Calu3 (cell line): ENCODE measurements at regions of chr20 and their contacts with region 1.

Region 1: DNA sequence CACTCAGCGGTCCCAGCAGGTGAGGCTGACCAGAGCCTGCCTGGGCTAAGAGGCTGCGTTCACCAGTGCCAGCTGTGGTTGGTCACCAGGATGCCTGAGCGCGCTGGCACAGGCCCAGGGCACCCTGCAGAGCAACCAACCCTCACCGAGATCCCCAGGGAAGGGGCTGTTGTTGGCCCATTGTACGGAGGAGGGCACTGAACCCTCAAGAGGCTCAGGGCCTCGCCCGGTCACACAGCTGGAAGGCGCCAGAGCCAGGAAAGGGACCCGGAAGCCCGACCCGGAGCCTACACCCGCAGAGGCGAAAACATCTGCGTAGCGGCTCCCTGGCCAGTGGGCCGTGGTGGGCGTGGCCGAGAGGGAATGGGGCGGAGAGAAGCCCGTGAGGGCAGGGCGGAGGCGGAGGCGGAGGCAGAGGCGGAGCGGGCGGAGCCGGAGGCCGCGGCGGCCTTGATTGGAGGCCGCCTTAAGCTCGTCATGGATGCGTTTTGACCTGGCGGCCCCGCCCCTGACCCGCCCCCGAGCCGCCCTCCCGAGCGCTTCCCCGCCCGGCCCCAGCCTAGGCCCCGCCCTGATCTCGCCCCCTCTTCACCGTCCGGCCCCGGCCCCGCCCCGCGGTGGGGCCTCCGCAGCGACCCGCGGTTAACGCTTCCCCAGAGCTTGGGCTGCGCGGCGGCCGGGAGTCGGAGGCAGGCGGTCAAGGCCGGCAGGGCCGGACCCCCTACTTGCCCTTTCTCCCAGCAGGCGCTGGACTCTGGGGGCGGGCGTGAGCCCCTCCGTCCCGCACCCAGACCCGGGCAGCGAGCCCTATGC is 2.2 kb upstream of the MRGBP start:
- DNase-seq: peak; percentile 99
- H3K4me3 Mint-ChIP-seq: peak overlapping the region; percentile 78
- H3K27ac Mint-ChIP-seq: peak overlapping the region; percentile 82
- H3K4me1 Mint-ChIP-seq: peaks cover 41% of the 10 kb centered on the region
- H3K27me3 Mint-ChIP-seq: peaks cover 15% of the 10 kb centered on the region
- CTCF ChIP-seq: no peak

Region 2: GRCh38 chr20:62500237-62500864 is 293.8 kb before region 1 on chr20:
- CTCF ChIA-PET with region 1: interaction called, 5 read pairs
- intact Hi-C with region 1: loop called (anchors 5 kb)
- DNase-seq: peak; percentile 90
- H3K4me3 Mint-ChIP-seq: no peak overlapping the region
- H3K27ac Mint-ChIP-seq: peak overlapping the region; percentile 1
- H3K4me1 Mint-ChIP-seq: peaks cover 20% of the 10 kb centered on the region
- H3K27me3 Mint-ChIP-seq: peaks cover 23% of the 10 kb centered on the region
- CTCF ChIP-seq: peak; percentile 93

Region 3: GRCh38 chr20:62623488-62624324 is 170.4 kb before region 1 on chr20:
- CTCF ChIA-PET with region 1: interaction called, 8 read pairs
- intact Hi-C with region 1: loop called (anchors 2 kb)
- DNase-seq: peak; percentile 98
- H3K4me3 Mint-ChIP-seq: peak overlapping the region; percentile 44
- H3K27ac Mint-ChIP-seq: peak overlapping the region; percentile 86
- H3K4me1 Mint-ChIP-seq: peaks cover 37% of the 10 kb centered on the region
- H3K27me3 Mint-ChIP-seq: no peaks in the 10 kb centered on the region
- CTCF ChIP-seq: no peak

Region 4: DNA sequence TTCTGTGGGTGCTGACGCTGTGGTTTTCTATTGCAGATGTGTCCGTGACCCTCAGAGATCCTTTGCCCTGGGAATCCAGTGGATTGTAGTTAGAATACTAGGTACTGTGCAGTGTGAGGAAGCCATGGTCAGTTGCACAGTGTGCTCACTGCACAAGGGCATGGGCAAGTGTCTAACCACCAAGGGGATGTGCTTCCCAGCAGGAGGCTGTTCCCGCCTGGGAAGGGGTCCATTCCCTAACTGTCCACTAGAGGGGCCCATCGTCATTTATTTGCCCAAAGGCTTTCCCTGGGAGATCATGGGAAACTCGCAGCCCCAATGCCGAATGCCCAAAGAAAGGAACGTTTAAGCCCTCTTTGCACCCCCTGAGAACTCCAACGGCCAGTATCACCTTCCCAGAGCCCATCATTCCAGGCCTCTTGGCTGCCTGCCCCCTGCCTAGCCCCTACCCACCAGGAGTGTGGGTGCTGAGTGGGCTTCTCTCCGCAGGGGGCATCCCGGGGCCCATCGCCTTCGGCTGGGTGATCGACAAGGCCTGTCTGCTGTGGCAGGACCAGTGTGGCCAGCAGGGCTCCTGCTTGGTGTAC is 125.6 kb before region 1 on chr20:
- CTCF ChIA-PET with region 1: interaction called, 26 read pairs
- intact Hi-C with region 1: loop called (anchors 1 kb)
- DNase-seq: peak; percentile 89
- H3K4me3 Mint-ChIP-seq: peak overlapping the region; percentile 10
- H3K27ac Mint-ChIP-seq: peak overlapping the region; percentile 72
- H3K4me1 Mint-ChIP-seq: peaks cover 28% of the 10 kb centered on the region
- H3K27me3 Mint-ChIP-seq: no peaks in the 10 kb centered on the region
- CTCF ChIP-seq: peak; percentile 93

Region 5: DNA sequence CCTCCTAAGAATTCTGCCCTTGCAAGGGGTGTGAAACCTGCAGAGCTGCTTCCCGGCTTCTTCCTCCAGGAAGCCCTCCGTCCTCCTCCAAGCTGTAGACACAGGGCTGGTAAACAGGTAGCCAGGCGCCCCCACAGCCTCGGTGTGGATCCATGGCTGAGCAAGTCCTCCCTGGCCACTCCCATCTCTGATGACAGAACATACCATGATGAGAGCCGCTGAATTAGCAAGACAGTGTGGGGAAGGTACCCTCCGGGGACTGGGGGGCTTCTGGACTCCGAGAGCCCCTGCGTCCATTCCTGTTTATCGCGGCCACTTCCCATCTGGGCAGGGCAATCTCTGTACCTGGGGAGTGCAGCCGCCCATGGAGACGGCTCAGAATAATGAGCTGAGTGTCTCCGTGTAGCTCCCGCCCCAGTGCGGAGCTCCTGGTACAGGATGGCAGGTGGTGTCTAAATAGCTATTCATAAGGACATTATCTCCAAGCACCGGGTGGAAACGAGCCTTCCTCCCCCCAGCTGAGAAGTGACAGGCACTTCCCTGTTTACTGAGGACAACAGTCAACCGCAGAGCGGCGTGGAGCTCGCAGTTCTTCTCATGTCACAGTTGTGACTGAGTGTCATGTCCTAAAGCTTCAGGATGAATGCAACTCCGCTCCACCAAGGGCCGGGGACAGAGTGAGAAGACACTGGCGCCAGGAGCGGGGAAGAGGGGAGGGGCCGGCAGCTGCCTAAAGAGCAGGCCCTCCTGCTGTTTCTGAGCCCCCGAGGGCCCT is 108.2 kb before region 1 on chr20:
- CTCF ChIA-PET with region 1: interaction called, 10 read pairs
- intact Hi-C with region 1: loop called (anchors 5 kb)
- DNase-seq: no peak
- H3K4me3 Mint-ChIP-seq: no peak overlapping the region
- H3K27ac Mint-ChIP-seq: no peak overlapping the region
- H3K4me1 Mint-ChIP-seq: peaks cover 19% of the 10 kb centered on the region
- H3K27me3 Mint-ChIP-seq: peaks cover 84% of the 10 kb centered on the region
- CTCF ChIP-seq: no peak

Region 6: DNA sequence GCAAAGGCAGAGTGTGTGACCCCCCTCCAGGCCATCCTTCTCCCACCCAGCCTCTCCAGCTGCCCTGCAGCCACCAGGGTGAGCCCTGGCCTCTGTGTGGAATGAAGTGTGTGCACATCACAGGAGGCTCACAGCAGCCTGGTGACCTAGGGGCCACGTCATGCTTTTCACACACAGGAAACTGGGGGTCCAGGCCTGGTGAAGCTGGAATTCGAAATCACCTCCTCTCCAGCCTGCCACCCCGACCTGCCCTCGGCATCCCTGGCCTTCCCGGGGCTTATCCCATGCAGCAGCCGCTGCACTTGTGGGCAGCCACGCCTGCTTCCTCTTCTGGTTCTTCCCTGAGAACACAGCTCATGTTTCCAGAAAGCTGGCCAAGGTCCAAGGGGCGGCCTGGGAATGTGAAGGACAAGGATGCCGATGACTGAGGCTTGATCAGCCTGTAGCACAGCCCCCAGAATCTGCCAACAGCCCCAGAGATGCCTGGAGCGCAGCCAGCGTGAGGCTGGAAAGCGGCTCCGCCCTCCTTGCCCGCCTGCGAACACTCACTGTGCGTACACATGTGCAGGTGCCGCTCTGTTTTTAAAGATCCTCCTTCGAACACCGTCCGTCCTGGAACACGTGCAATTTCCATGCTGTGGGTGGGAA is 89.7 kb before region 1 on chr20:
- CTCF ChIA-PET with region 1: interaction called, 28 read pairs
- intact Hi-C with region 1: loop called (anchors 1 kb)
- DNase-seq: peak; percentile 94
- H3K4me3 Mint-ChIP-seq: peak overlapping the region; percentile 36
- H3K27ac Mint-ChIP-seq: peak overlapping the region; percentile 29
- H3K4me1 Mint-ChIP-seq: peaks cover 30% of the 10 kb centered on the region
- H3K27me3 Mint-ChIP-seq: peaks cover 54% of the 10 kb centered on the region
- CTCF ChIP-seq: no peak

Region 7: DNA sequence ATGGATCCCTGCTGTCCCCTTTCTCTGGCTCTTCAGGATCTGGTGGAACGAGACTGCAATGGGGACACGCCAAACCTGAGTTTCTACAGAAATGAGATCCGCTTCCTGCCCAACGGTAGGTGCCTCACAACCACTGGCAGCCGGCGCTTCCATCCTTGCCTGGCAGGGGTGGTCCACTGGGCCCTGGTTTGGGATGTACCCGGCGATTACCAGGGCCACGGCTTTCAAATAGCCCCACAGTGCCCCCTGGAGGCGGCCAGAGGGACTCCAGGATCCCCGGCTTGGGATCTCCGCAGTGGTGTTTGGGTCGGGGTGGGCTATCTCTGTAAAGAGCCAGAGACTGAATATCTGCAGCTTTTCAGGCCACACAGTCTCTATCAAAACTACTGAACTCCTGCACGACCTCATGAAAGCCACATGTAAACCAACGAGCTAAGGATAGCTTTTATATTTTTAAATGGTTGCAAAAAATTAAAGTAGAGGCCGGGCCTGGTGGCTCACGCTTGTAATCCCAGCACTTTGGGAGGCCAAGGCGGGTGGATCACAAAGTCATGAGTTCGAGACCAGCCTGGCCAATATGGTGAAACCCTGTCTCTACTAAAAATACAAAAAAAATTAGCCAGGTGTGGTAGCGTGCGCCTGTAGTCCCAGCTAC is 14.2 kb after region 1 on chr20:
- CTCF ChIA-PET with region 1: interaction called, 10 read pairs
- intact Hi-C with region 1: no loop called
- DNase-seq: peak; percentile 89
- H3K4me3 Mint-ChIP-seq: no peak overlapping the region
- H3K27ac Mint-ChIP-seq: no peak overlapping the region
- H3K4me1 Mint-ChIP-seq: peaks cover 31% of the 10 kb centered on the region
- H3K27me3 Mint-ChIP-seq: no peaks in the 10 kb centered on the region
- CTCF ChIP-seq: peak; percentile 99